Lower leg skin (tissue), 4 donors: ENCODE measurements at regions of chr5 and their contacts with region 1.

Region 1: DNA sequence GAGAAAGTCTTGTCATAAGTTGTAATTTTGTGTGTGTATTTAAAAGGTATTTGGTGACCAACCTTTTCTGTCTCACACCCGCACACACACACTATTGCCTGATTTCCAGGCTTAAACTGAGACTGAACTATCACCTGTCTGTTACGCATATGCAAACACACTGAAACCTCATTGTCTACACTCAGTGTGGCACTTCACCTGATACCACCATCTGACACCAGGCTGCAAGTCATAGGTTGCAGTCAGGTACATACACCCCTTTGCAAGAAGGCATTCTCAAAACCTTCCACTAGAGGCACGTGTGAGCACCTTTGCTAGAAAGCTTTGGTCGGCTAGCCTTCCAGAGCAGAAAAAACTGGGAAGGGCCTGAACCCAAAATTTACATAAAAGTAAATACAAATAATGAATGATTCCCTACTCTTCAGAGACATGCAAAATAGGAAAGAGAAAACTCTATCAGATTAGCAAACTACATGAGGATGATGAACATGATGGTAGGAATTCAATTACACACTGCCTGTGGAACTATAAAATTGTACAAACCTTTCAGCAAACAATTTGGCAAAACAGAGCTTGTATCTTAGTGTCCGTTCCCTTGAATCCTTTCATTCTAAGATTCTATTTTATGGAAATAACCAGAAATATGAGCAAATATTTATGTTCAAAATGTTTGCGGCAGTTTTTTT is 5.9 kb upstream of the FOXD1 start:
- DNase-seq: no peak
- H3K4me3 ChIP-seq: no peak overlapping the region
- CTCF ChIP-seq: no peak
- POLR2A ChIP-seq: no peak

Region 2: GRCh38 chr5:73215891-73216610 is 238.4 kb before region 1 on chr5:
- intact Hi-C with region 1: loop called (anchors 5 kb)
- DNase-seq: peak; percentile 57 to 95
- H3K4me3 ChIP-seq: no peak overlapping the region
- CTCF ChIP-seq: peak in 1 of 3 donors; percentile 64
- POLR2A ChIP-seq: no peak